Vagina (tissue), 2 donors: ENCODE measurements at regions of chr10 and their contacts with region 1.

Region 1: GRCh38 chr10:101291331-101292193 is 62.3 kb upstream of the LBX1 start:
- DNase-seq: no peak
- H3K4me3 ChIP-seq: peak overlapping the region; percentile 44 to 55
- H3K27ac ChIP-seq: no peak overlapping the region
- H3K4me1 ChIP-seq: peaks cover 13% of the 10 kb centered on the region
- H3K27me3 ChIP-seq: no peaks in the 10 kb centered on the region
- CTCF ChIP-seq: peak in 2 of 3 experiments; percentile 28 to 41
- POLR2A ChIP-seq: no peak

Region 2: DNA sequence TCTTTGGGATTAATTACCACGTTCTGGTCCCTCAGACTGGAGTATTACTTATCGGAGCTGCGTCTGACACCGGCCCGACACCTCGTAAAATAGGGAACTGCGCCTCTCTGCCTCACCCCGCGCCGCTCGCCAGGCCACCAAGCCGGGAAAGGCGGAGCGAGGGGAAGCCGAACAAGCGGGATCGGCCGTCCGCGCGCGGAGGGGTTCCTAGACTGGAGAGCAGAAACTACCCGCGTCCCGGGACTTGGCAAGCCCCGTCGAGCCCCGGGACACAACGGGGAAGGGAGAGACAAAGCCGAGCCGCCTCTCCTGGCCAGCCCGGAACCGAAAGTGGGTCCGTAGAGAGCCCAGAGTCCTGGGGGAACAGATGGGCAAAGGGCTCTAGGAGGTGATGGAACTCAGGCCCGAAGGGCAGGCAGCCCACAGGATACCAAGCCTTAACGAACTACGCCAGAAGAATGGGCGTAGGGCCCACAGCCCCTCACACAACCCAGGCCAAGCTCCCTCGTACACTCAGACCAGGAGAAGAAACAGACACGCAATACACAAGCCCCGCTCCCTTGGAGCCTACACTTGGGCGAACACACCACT is 68.8 kb before region 1 on chr10:
- intact Hi-C with region 1: loop called (anchors 5 kb)
- DNase-seq: no peak
- H3K4me3 ChIP-seq: peak overlapping the region; percentile 17 to 32
- H3K27ac ChIP-seq: no peak overlapping the region
- H3K4me1 ChIP-seq: peaks cover 67% of the 10 kb centered on the region
- H3K27me3 ChIP-seq: peaks cover 58% of the 10 kb centered on the region
- CTCF ChIP-seq: no peak
- POLR2A ChIP-seq: no peak

Region 3: GRCh38 chr10:101576211-101576863 is 284.8 kb after region 1 on chr10:
- intact Hi-C with region 1: no loop called
- DNase-seq: no peak
- H3K4me3 ChIP-seq: no peak overlapping the region
- H3K27ac ChIP-seq: no peak overlapping the region
- H3K4me1 ChIP-seq: no peaks in the 10 kb centered on the region
- H3K27me3 ChIP-seq: no peaks in the 10 kb centered on the region
- CTCF ChIP-seq: no peak
- POLR2A ChIP-seq: no peak